Right cardiac atrium (tissue), 5 donors: ENCODE measurements at regions of chr1 and their contacts with region 1.

Region 1: GRCh38 chr1:188402986-188403385 is 1574.2 kb downstream of the PLA2G4A start:
- DNase-seq: no peak
- ATAC-seq: no peak
- H3K4me3 ChIP-seq: no peak overlapping the region
- H3K27ac ChIP-seq: no peak overlapping the region
- H3K4me1 ChIP-seq: no peaks in the 10 kb centered on the region
- H3K27me3 ChIP-seq: no peaks in the 10 kb centered on the region

Region 2: DNA sequence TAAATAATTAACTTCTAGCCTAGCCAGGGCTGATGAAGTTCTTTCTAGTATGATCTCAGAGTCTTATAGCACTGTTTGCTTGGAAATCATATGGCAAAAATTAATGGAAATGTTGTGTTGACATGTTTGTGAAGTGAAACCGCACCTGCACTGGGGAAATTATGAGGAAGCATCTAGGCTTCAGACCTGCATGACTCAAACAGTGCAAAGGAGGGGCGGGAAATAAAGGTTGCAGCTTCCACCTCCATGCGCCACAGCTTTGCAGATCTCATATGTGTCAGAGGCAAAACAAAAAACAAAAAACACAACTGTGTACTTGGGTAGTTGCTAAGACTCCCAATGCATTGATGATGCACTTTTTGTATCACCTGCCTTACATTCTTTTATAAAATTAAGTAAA is 493.6 kb before region 1 on chr1:
- intact Hi-C with region 1: loop called in 1 of 4 experiments (anchors 10 kb)
- DNase-seq: no peak
- ATAC-seq: no peak
- H3K4me3 ChIP-seq: no peak overlapping the region
- H3K27ac ChIP-seq: no peak overlapping the region
- H3K4me1 ChIP-seq: no peaks in the 10 kb centered on the region
- H3K27me3 ChIP-seq: no peaks in the 10 kb centered on the region

Region 3: GRCh38 chr1:188325211-188325610 is 77.8 kb before region 1 on chr1:
- intact Hi-C with region 1: no loop called
- DNase-seq: no peak
- ATAC-seq: no peak
- H3K4me3 ChIP-seq: no peak overlapping the region
- H3K27ac ChIP-seq: no peak overlapping the region
- H3K4me1 ChIP-seq: no peaks in the 10 kb centered on the region
- H3K27me3 ChIP-seq: no peaks in the 10 kb centered on the region